Calu3 (cell line): ENCODE measurements at regions of chr2 and their contacts with region 1.

Region 1: GRCh38 chr2:15939854-15940660 is at the start of gene MYCN:
- DNase-seq: peak; percentile 81
- H3K4me3 Mint-ChIP-seq: peak within 1 kb of the TSS; percentile 99
- H3K27ac Mint-ChIP-seq: peak within 1 kb of the TSS; percentile 50
- H3K4me1 Mint-ChIP-seq: peaks cover 22% of the 10 kb centered on the region
- H3K27me3 Mint-ChIP-seq: no peaks in the 10 kb centered on the region
- CTCF ChIP-seq: peak; percentile 86
- total RNA-seq, gene MYCN: 5.5 and 8.7 TPM in 2 replicates

Region 2: DNA sequence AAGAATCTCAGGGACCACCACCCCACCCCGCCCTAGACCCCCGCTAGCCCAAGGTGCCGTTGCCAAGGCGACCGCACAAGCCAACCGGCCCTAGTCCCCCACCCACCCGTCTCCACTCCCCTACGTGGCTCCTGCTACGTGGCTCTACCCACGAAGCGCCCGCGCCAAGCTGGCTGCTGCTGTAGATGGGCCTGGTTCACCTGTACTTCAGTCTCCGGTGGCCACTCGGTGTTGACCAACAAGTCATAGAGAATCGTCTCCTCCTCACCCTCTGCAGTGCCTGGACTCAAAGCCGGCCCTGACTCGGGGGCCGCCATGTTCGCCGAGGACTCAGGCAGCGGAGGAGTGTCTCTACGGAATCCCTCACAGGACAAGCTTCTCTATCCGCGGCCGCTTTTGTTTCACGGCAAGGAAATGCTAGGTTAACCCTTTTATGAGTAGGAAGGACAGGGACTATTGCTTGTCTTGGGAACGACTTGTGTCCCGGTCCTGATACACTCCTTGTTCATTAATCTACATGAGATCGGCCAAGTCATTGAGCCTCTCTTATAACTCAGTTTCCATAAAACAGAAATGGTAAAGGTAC is 379.0 kb before region 1 on chr2 and contains the start of gene NBAS:
- CTCF ChIA-PET with region 1: no interaction called
- intact Hi-C with region 1: no loop called
- DNase-seq: peak; percentile 78
- H3K4me3 Mint-ChIP-seq: peak within 1 kb of the TSS; percentile 96
- H3K27ac Mint-ChIP-seq: peak within 1 kb of the TSS; percentile 77
- H3K4me1 Mint-ChIP-seq: peaks cover 20% of the 10 kb centered on the region
- H3K27me3 Mint-ChIP-seq: no peaks in the 10 kb centered on the region
- CTCF ChIP-seq: no peak
- total RNA-seq, gene NBAS: 25.9 and 30.4 TPM in 2 replicates

Region 3: GRCh38 chr2:15818205-15818809 is 121.8 kb before region 1 on chr2:
- CTCF ChIA-PET with region 1: no interaction called
- intact Hi-C with region 1: no loop called
- DNase-seq: no peak
- H3K4me3 Mint-ChIP-seq: no peak overlapping the region
- H3K27ac Mint-ChIP-seq: no peak overlapping the region
- H3K4me1 Mint-ChIP-seq: no peaks in the 10 kb centered on the region
- H3K27me3 Mint-ChIP-seq: peaks cover 49% of the 10 kb centered on the region
- CTCF ChIP-seq: no peak

Region 4: GRCh38 chr2:15867194-15868171 is 72.6 kb before region 1 on chr2:
- CTCF ChIA-PET with region 1: no interaction called
- intact Hi-C with region 1: no loop called
- DNase-seq: no peak
- H3K4me3 Mint-ChIP-seq: no peak overlapping the region
- H3K27ac Mint-ChIP-seq: no peak overlapping the region
- H3K4me1 Mint-ChIP-seq: peaks cover 7% of the 10 kb centered on the region
- H3K27me3 Mint-ChIP-seq: peaks cover 23% of the 10 kb centered on the region
- CTCF ChIP-seq: no peak

Region 5: DNA sequence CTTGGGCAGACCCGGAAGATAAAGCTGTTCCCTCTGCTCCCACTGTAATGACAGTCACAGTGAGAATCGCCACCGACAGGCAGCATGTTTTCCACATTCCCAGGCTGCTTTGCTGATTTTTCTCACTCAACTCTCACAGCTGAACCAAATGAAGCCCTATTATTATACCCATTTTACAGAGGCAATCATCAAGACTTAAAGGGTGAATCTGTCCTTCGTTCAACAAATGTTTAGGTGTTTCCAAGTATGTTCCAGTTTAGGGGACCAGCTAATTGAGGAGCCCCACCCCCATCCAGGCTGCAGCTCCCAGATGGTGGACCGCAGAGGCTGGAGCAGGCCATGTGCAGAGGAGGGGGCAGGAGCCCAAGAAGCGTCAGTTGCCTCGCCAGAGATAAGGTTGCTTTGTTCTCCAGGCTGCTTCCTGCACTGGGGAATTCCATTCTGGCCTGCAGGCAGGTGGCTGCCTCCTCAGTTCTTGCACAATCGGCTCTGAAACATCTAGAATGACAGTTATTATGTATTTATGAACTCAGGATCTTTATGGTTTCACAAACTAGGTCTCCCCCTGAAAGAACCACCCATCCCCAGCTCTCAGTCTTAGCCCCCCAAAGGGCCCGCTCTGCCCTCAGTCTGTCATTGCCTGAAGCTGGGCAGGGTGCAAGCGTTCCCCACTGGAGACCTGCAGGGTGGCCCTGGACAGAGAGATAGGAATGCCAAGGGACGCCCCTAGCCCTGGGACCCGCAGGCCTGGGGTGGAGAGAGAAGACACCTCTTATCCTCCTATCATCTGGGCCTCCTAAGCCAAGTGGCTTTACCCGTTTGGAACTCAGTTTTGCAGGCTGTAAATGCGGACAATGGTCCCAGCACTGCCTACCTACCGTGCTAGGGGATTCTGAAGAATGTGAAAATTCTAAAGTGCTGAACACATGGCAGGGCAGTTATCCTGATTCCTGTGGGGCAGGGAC is 48.8 kb before region 1 on chr2:
- CTCF ChIA-PET with region 1: no interaction called
- intact Hi-C with region 1: no loop called
- DNase-seq: peak; percentile 70
- H3K4me3 Mint-ChIP-seq: no peak overlapping the region
- H3K27ac Mint-ChIP-seq: no peak overlapping the region
- H3K4me1 Mint-ChIP-seq: peaks cover 10% of the 10 kb centered on the region
- H3K27me3 Mint-ChIP-seq: no peaks in the 10 kb centered on the region
- CTCF ChIP-seq: no peak

Region 6: GRCh38 chr2:15965564-15966019 is 25.5 kb after region 1 on chr2:
- CTCF ChIA-PET with region 1: interaction called, 6 read pairs
- intact Hi-C with region 1: loop called (anchors 2 kb)
- DNase-seq: no peak
- H3K4me3 Mint-ChIP-seq: no peak overlapping the region
- H3K27ac Mint-ChIP-seq: no peak overlapping the region
- H3K4me1 Mint-ChIP-seq: peaks cover 47% of the 10 kb centered on the region
- H3K27me3 Mint-ChIP-seq: no peaks in the 10 kb centered on the region
- CTCF ChIP-seq: no peak

Region 7: GRCh38 chr2:16069933-16070647 is 130.0 kb after region 1 on chr2:
- CTCF ChIA-PET with region 1: no interaction called
- intact Hi-C with region 1: loop called (anchors 5 kb)
- DNase-seq: peak; percentile 48
- H3K4me3 Mint-ChIP-seq: peak overlapping the region; percentile 37
- H3K27ac Mint-ChIP-seq: no peak overlapping the region
- H3K4me1 Mint-ChIP-seq: no peaks in the 10 kb centered on the region
- H3K27me3 Mint-ChIP-seq: no peaks in the 10 kb centered on the region
- CTCF ChIP-seq: no peak

Region 8: GRCh38 chr2:16255120-16255519 is 315.1 kb after region 1 on chr2:
- CTCF ChIA-PET with region 1: no interaction called
- intact Hi-C with region 1: loop called (anchors 1 kb)
- DNase-seq: no peak
- H3K4me3 Mint-ChIP-seq: no peak overlapping the region
- H3K27ac Mint-ChIP-seq: no peak overlapping the region
- H3K4me1 Mint-ChIP-seq: no peaks in the 10 kb centered on the region
- H3K27me3 Mint-ChIP-seq: no peaks in the 10 kb centered on the region
- CTCF ChIP-seq: no peak

Region 9: GRCh38 chr2:16507655-16508489 is 567.8 kb after region 1 on chr2:
- CTCF ChIA-PET with region 1: interaction called, 3 read pairs
- intact Hi-C with region 1: loop called (anchors 5 kb)
- DNase-seq: peak; percentile 68
- H3K4me3 Mint-ChIP-seq: peak overlapping the region; percentile 58
- H3K27ac Mint-ChIP-seq: no peak overlapping the region
- H3K4me1 Mint-ChIP-seq: no peaks in the 10 kb centered on the region
- H3K27me3 Mint-ChIP-seq: peaks cover 55% of the 10 kb centered on the region
- CTCF ChIP-seq: peak; percentile 49